GM10248 (cell line): ENCODE measurements at regions of chr20 and their contacts with region 1.

Region 1: DNA sequence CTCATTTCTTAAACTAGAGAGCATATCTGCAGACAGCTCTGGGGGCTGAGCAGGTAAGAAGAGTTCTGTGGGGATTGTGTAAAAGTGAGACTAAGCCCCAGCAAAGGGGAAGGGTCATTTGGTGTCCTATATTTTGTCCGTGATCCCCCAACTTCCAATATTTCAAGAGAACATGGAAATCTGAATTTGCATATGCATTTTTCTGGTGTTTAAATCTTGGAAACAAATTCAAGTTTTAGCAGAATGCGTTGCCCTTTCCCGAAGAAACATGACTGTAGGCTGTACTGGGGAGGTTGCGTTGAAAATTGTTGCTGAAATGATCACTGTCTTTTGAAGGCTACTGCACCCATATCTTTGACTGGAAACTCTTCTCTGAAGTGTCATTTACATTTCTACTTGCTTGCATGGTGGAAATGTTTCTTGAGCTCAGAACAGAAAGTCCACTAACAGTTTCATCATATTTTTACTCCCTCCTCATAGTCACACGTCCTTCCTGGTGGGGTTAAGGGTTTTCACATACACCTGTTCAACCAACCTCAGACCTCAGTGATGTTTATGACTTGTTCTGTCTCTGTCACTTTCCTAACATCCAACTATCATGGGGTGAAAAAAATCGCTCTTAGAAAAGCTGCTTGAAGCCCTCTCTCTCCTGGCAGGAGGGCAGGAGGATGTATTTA is 140.3 kb downstream of the BCAS1 start:
- DNase-seq: peak; percentile 57
- CTCF ChIP-seq: no peak

Region 2: DNA sequence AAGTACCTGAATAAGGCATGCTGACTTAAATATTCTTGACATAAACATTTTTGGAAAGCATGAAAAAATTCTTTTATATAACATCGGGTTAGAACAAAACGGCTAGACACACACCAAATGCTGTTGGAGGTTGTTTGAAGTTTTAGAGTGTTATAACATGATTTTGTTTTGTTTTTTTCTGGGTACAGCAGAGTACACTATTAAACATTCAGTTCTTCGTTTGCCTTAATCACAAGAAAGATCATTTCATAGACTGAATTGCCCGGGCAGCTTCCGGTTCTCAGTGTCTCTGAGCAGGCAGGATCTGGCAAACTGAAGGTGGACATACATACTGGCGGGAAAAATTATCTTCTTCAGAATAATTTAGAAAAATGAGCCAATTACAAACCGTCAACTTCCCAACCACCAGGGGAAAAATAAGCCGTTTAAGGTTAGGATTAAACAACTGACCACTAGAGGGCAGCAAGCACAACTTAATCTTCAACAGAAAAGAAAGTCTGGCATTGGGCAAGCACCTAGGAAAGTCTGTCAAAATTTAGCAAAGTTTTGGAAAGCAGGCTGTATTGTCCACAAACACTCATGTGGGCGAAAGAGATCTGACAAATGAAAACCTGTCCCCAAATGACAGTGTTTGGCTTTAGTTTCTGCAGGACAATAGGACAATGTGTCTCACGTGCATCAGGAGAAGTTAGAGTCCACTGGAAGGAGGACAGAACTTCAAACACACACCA is 351.5 kb before region 1 on chr20:
- CTCF ChIA-PET with region 1: interaction called, 17 read pairs
- POLR2A ChIA-PET with region 1: no interaction called
- DNase-seq: peak; percentile 72
- CTCF ChIP-seq: peak; percentile 67

Region 3: GRCh38 chr20:53878578-53879363 is 51.3 kb before region 1 on chr20:
- CTCF ChIA-PET with region 1: no interaction called
- POLR2A ChIA-PET with region 1: no interaction called
- DNase-seq: no peak
- CTCF ChIP-seq: no peak

Region 4: DNA sequence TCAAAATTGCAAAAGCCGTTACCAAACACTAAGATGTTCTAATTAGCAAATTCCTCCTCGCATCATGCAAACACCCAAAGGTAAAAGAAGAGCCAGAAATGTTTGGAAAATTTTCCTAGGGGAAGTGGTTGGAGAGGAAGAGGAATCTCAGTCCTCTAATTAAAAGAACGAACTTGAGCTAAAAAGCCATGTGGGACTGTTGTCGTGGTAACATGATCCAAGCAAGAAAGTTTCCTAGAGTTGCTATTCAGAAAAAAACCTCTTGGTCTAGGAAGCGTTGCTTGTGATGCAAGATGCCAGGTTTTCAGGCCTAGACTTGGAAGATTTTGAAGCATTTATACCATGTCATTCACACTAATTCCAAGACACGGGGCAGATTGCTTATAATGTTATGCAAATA is 438.4 kb after region 1 on chr20:
- CTCF ChIA-PET with region 1: no interaction called
- POLR2A ChIA-PET with region 1: no interaction called
- DNase-seq: no peak
- CTCF ChIP-seq: no peak